Thyroid gland (tissue), 4 donors: ENCODE measurements at regions of chr3 and their contacts with region 1.

Region 1: DNA sequence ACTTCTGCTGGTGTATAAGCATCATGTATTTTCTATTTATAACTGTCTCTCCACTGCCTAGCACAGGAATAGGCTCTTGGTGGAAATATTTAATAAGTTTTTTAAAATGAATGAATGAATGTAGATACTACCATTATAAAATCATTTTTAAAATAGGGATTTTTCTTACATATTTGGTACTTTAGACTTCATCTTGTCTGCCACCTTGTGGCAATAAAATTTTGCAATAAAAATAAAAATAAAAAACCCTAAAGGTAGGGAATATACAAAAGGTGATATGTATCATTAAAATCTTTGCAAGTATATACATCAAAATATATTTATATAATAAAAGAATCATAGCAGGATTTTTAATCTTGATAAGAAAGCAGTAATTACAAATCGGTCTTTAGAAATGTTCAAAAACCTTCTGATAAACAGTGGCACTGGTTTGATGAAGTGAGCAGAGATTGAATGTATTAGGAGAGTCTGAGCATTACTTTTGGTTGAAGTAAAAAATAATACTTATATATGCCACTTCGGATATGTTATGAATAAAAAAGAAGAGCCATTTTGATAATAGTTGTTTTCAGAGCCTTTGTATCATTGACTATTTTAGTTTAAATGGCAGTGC is 95.2 kb downstream of the SPATA16 start:
- DNase-seq: no peak
- H3K4me3 ChIP-seq: no peak overlapping the region
- H3K27ac ChIP-seq: no peak overlapping the region
- H3K4me1 ChIP-seq: no peaks in the 10 kb centered on the region
- H3K27me3 ChIP-seq: no peaks in the 10 kb centered on the region
- CTCF ChIP-seq: peak in 3 of 6 experiments; percentile 6 to 43 (median 29)
- POLR2A ChIP-seq: no peak

Region 2: DNA sequence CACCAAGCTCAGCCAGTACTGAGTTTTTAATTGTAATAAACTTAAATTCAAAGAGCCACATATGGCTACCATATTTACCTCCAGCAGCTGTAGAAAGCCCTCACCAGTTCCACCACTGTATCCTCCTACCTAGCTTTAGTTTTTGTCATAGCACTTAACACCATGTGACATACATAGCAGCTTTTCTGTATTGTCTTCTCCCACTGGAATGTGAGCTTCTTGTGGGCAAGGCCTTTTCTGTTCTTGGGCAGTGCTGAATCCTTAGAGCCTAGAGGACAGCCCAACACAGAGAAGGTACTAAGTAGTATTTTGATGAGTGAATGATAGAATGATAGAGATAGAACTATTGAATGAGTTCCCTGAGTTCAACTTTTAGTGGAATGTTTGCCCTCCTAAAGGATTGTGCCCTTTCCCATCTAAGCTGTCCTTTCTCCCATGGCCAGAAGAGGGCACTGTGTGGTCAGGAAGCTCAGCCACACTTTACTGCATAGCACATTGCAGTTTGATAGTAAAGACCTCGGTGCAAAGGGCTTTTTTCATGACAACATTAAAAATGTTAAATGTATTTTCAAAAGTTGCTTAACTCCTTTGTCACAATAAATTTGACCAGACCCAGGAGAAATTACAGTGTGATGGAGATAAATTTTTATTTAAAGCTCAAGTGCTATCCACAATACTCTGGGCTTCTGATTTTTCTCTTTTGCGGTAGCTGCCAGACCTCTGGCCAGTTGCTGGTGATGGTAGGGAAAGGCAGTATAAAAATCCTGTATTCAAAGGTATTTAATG is 713.4 kb before region 1 on chr3:
- intact Hi-C with region 1: no loop called
- DNase-seq: peak; percentile 64 to 66
- H3K4me3 ChIP-seq: no peak overlapping the region
- H3K27ac ChIP-seq: peak overlapping the region in 1 of 3 donors; percentile 2
- H3K4me1 ChIP-seq: no peaks in the 10 kb centered on the region
- H3K27me3 ChIP-seq: no peaks in the 10 kb centered on the region
- CTCF ChIP-seq: peak; percentile 74 to 90 (median 84)
- POLR2A ChIP-seq: no peak

Region 3: GRCh38 chr3:172836390-172836997 is 209.4 kb before region 1 on chr3:
- intact Hi-C with region 1: loop called (anchors 10 kb)
- DNase-seq: peak; percentile 22 to 39
- H3K4me3 ChIP-seq: no peak overlapping the region
- H3K27ac ChIP-seq: no peak overlapping the region
- H3K4me1 ChIP-seq: no peaks in the 10 kb centered on the region
- H3K27me3 ChIP-seq: no peaks in the 10 kb centered on the region
- CTCF ChIP-seq: peak in 5 of 6 experiments; percentile 10 to 52 (median 44)
- POLR2A ChIP-seq: no peak

Region 4: GRCh38 chr3:173411375-173411973 is 365.6 kb after region 1 on chr3:
- intact Hi-C with region 1: no loop called
- DNase-seq: no peak
- H3K4me3 ChIP-seq: no peak overlapping the region
- H3K27ac ChIP-seq: no peak overlapping the region
- H3K4me1 ChIP-seq: no peaks in the 10 kb centered on the region
- H3K27me3 ChIP-seq: no peaks in the 10 kb centered on the region
- CTCF ChIP-seq: peak in 2 of 6 experiments; percentile 12 to 33
- POLR2A ChIP-seq: no peak